HEK293T (cell line): ENCODE measurements at regions of chr16 and their contacts with region 1.

Region 1: GRCh38 chr16:57244767-57245471 is at the start of gene ARL2BP:
- DNase-seq: peak; percentile 99

Region 2: DNA sequence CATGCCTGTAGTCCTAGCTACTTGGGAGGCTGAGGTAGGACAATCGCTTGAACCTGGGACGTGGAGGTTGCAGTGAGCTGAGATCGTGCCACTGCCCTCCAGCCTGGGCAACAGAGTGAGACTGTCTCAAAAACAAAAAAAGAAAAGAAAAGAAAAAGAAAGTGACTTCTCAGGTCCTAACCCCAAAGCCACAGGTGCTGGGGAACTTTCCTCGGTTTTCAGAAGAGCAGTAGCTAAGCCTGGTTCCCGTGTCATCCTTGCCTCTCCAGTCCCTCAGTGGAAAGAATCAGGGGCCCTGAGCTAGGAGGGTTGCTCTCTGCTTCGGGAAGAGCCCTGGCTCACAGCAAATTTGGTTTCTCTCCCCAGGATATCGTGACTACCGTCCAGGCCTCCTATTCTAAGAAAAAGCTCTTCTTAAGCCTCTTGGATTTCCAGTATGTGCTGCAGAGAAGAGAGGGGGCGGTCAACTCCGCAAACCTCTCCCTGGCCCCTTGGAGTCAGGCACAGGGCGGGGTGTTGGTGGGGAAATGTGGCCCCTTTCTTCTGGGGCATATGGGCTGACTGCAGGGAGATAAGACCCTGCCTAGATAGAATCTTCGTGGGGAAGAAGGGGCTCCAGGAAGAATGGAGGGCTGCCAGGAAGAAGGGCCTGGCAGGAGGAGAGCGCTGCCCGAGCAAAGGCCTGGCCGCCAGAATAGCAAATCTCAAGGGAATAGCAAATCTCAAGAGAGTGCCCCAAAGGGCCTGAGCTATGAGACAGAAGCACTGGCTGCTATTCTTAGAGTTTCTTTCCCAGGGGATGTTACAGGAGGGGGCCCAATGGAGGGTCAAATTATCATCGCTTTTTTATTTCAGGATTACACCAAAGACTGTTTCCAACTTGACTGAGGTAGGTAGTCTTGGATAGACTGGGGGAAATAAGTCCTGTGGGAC is 263.9 kb before region 1 on chr16:
- CTCF ChIA-PET with region 1: no interaction called
- POLR2A ChIA-PET with region 1: no interaction called
- DNase-seq: no peak

Region 3: DNA sequence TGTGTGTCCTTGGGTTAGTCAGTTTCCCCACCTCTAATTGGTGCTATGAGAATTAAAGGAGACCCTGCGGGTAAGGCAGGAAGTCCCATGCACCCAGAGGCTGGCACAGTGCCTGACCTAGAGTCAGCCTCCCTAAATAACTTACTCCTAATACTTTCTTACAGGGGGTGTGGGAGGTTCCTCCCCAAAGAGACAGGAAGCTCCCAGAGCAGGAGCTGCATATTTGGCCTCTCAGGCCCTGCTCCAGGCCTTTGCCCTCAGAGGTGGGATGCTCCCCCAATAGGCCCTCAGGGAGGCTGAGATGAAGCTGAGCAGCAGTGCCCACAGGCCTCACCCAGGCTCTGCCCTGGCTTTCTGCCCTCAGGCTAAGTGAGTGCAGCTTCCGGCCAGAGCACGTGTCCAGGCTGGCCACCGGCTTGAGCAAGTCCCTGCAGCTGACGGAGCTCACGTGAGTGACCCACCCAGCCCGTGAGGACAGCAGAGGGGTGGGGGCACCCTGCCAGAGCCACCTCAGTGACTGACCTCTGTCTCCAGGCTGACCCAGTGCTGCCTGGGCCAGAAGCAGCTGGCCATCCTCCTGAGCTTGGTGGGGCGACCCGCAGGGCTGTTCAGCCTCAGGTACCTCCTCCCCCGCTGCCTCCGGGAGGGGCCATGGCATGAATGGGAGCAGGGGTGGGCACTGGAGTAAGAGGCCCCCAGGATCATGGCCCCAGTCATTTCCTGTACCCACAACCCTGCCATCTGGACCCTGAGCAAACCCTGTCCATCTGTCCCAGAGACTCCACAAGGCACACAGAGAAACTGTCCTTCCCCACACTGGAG is 183.6 kb before region 1 on chr16:
- CTCF ChIA-PET with region 1: no interaction called
- POLR2A ChIA-PET with region 1: no interaction called
- DNase-seq: no peak

Region 4: GRCh38 chr16:57185944-57186871 is 58.7 kb before region 1 on chr16 and contains the starts of genes PSME3IP1 and RSPRY1:
- CTCF ChIA-PET with region 1: interaction called, 6 read pairs
- POLR2A ChIA-PET with region 1: interaction called, 16 read pairs
- DNase-seq: peak; percentile 99

Region 5: GRCh38 chr16:57277586-57277985 is 32.7 kb after region 1 on chr16:
- CTCF ChIA-PET with region 1: no interaction called
- POLR2A ChIA-PET with region 1: no interaction called
- DNase-seq: no peak